Mammary epithelial cell (primary cell): ENCODE measurements at regions of chr10 and their contacts with region 1.

Region 1: DNA sequence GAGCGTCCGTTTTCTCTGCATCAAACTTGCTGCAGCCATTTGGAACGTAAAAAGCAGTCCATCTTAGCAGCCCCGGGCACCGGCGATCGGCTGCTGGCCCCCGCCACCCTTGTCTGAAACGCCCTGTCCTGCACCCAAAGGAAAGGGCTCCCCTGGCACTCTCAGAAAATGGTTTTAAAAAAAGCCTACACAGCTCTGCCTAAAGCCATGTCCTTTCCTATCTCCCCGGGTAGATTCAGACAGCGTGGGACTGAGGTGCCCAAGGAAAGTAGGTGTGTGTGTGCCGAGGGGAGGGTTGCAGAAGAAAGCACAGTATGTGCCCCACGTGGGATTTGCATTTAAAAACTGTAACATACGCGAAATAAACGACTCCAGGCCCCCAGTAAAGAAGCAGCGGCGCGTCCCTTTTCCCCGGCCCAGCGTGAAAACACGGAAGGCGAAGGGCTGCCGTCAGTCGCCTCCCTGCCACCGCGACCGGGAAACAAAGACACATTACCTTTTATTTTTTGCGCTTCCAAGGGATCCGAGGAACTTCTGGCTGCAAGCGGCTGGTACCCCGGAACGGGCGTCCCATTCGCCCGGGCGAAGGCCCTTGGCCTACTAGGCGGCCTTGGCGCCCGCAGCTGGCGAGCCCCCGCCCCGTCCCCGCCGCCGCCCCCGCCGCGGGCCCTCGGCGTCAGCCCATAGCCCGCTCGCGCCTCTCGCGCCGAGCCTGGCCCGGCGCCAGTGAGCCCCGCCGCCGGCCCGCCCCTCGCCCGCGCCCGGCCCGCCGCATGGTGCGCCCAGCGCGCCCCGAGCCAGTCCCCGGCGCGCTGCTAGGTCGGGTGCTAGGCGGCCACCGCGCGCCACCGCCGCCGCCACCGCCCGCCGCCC is 304.6 kb downstream of the PRPF18 start:
- DNase-seq: no peak
- H3K4me3 ChIP-seq: peak overlapping the region; percentile 44 to 67 (median 53)
- H3K27ac ChIP-seq: peak overlapping the region; percentile 18
- H3K4me1 ChIP-seq: peaks cover 39% of the 10 kb centered on the region
- H3K27me3 ChIP-seq: no peaks in the 10 kb centered on the region
- CTCF ChIP-seq: no peak

Region 2: GRCh38 chr10:13827076-13827797 is 64.1 kb before region 1 on chr10:
- CTCF ChIA-PET with region 1: no interaction called
- dilution Hi-C with region 1: loop called (anchors 5 kb)
- in situ Hi-C with region 1: no loop called
- intact Hi-C with region 1: no loop called
- DNase-seq: no peak
- H3K4me3 ChIP-seq: no peak overlapping the region
- H3K27ac ChIP-seq: no peak overlapping the region
- H3K4me1 ChIP-seq: no peaks in the 10 kb centered on the region
- H3K27me3 ChIP-seq: no peaks in the 10 kb centered on the region
- CTCF ChIP-seq: no peak